Mammary epithelial cell (primary cell): ENCODE measurements at regions of chr4 and their contacts with region 1.

Region 1: GRCh38 chr4:177108708-177109107 is 201.0 kb upstream of the NEIL3 start:
- DNase-seq: peak; percentile 21
- H3K4me3 ChIP-seq: no peak overlapping the region
- H3K27ac ChIP-seq: no peak overlapping the region
- H3K4me1 ChIP-seq: no peaks in the 10 kb centered on the region
- H3K27me3 ChIP-seq: no peaks in the 10 kb centered on the region
- CTCF ChIP-seq: peak; percentile 33 to 63

Region 2: DNA sequence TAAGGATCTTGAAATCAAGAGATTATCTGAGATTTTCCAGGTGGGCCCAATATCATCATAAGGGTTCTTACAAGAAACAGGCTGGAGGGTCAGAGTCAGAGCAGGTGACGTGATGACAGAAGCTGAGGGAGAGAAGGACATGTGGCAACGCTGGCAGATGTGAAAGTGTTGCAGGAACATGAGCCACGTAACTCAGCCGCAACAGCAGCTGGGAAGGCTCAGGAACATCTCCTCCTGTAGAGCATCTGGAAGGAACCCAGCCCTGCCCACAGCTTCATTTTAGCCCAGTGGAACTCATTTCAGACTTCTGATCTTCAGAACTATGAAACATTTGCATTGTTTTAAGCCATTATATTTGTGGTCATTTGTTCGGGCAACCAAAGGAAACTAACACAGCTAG is 159.7 kb before region 1 on chr4:
- CTCF ChIA-PET with region 1: no interaction called
- dilution Hi-C with region 1: no loop called
- in situ Hi-C with region 1: no loop called
- intact Hi-C with region 1: no loop called
- DNase-seq: no peak
- H3K4me3 ChIP-seq: no peak overlapping the region
- H3K27ac ChIP-seq: no peak overlapping the region
- H3K4me1 ChIP-seq: no peaks in the 10 kb centered on the region
- H3K27me3 ChIP-seq: no peaks in the 10 kb centered on the region
- CTCF ChIP-seq: no peak

Region 3: GRCh38 chr4:176964116-176964691 is 144.5 kb before region 1 on chr4:
- CTCF ChIA-PET with region 1: interaction called, 15 read pairs
- dilution Hi-C with region 1: no loop called
- in situ Hi-C with region 1: no loop called
- intact Hi-C with region 1: no loop called
- DNase-seq: peak; percentile 32
- H3K4me3 ChIP-seq: no peak overlapping the region
- H3K27ac ChIP-seq: no peak overlapping the region
- H3K4me1 ChIP-seq: no peaks in the 10 kb centered on the region
- H3K27me3 ChIP-seq: no peaks in the 10 kb centered on the region
- CTCF ChIP-seq: peak; percentile 46 to 63

Region 4: GRCh38 chr4:177250056-177250696 is 141.5 kb after region 1 on chr4:
- CTCF ChIA-PET with region 1: interaction called, 5 read pairs
- dilution Hi-C with region 1: no loop called
- in situ Hi-C with region 1: no loop called
- intact Hi-C with region 1: loop called (anchors 1 kb)
- DNase-seq: peak; percentile 58
- H3K4me3 ChIP-seq: no peak overlapping the region
- H3K27ac ChIP-seq: no peak overlapping the region
- H3K4me1 ChIP-seq: no peaks in the 10 kb centered on the region
- H3K27me3 ChIP-seq: peaks cover 2% of the 10 kb centered on the region
- CTCF ChIP-seq: peak; percentile 99 to 100

Region 5: GRCh38 chr4:177339477-177340374 is 231.0 kb after region 1 on chr4:
- CTCF ChIA-PET with region 1: no interaction called
- dilution Hi-C with region 1: no loop called
- in situ Hi-C with region 1: loop called in 1 of 2 experiments (anchors 25 kb)
- intact Hi-C with region 1: loop called (anchors 1 kb)
- DNase-seq: peak; percentile 35
- H3K4me3 ChIP-seq: no peak overlapping the region
- H3K27ac ChIP-seq: no peak overlapping the region
- H3K4me1 ChIP-seq: no peaks in the 10 kb centered on the region
- H3K27me3 ChIP-seq: no peaks in the 10 kb centered on the region
- CTCF ChIP-seq: peak; percentile 70 to 77

Region 6: GRCh38 chr4:177546745-177547144 is 438.0 kb after region 1 on chr4:
- CTCF ChIA-PET with region 1: no interaction called
- dilution Hi-C with region 1: no loop called
- in situ Hi-C with region 1: no loop called
- intact Hi-C with region 1: loop called (anchors 1 kb)
- DNase-seq: peak; percentile 24
- H3K4me3 ChIP-seq: no peak overlapping the region
- H3K27ac ChIP-seq: no peak overlapping the region
- H3K4me1 ChIP-seq: no peaks in the 10 kb centered on the region
- H3K27me3 ChIP-seq: no peaks in the 10 kb centered on the region
- CTCF ChIP-seq: peak; percentile 17 to 53